Right ventricle myocardium inferior (tissue), 1 donor: ENCODE measurements at regions of chr15 and their contacts with region 1.

Region 1: DNA sequence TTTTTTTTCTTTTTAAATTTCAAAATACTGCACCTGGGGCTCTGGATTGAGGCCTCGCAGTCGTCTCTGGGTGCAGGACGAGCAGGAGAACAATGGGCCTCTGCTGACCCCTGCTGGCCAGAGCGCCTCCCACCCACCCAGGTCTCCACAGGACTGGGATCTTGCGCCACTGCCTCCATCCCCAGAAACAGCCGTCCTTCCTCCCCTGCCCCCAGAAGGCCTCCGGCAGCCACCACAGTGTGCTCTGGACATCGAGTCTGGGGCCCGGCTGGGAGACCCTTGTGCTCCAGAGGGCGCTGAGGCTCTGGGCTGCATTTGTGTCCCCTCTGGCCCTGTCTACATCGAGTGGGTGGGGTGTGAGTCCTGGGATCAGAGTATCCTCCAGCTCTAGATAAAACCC is 6.6 kb upstream of the ACSBG1 start:
- DNase-seq: peak; percentile 88
- ATAC-seq: peak; percentile 92

Region 2: DNA sequence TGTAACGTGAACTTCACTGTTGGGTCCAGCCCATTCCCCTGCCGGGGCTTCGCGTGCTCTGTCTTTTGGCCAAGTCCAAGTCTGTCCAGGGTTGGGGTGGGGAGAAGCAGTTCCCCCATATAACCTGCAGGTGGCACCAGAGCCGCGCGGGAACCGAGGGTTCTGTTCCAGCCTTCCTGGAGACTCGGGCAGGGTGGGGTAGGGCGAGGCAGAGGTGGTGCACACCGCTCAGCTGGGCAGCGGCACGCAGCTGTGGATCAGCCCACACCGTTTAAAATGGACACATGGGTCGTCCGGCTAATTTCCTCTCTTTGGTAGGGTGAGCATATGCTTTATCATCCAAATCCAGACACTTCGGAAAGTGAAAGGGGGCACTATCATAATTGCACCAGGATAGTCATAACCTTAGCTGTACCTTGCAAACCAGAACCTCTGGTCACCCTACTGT is 281.6 kb before region 1 on chr15:
- intact Hi-C with region 1: loop called (anchors 5 kb)
- DNase-seq: peak; percentile 92
- ATAC-seq: peak; percentile 98

Region 3: DNA sequence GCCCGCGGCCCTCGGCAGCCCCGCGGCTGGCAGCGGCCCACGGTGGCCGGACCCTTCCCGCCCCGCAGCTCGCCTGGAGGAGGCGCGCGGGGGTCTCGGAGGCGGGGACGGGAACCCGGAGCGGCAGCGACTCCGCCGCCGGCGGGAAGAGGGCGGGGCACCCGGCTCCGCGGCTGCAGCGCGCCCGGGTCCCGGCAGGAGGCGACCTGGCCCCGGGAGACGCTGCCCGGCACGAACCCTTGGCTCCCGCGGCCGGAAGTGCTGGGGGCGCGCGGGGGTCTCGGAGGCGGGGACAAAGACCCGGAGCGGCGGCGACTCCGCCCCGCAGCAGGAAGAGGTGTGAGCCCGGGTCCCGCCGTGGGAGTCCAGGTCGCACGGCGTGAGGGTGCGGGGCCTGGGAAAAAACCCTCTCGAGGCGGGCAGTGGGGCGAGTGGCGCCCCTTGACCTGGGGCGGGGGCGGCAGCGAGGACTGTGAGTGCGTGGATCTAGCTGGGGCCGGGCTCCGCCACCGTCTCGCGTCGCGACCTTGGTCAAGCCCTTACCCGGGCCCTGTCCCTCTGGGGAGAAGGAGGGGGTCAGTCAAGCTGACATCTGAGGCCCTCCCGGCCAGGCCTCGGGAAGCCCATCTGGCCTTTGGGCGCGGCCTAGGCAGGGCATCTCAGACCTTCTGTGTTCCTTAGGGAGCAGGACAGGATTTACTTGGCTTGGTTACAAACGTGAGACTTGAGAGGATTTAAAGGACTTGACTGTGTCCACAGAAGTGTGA is 109.5 kb before region 1 on chr15 and contains the start of gene CIB2:
- intact Hi-C with region 1: loop called (anchors 5 kb)
- DNase-seq: peak; percentile 86
- ATAC-seq: peak; percentile 89
- total RNA-seq, gene CIB2: 21.2 TPM

Region 4: GRCh38 chr15:78177447-78177873 is 63.5 kb before region 1 on chr15:
- intact Hi-C with region 1: loop called (anchors 1 kb)
- DNase-seq: no peak
- ATAC-seq: peak; percentile 51

Region 5: DNA sequence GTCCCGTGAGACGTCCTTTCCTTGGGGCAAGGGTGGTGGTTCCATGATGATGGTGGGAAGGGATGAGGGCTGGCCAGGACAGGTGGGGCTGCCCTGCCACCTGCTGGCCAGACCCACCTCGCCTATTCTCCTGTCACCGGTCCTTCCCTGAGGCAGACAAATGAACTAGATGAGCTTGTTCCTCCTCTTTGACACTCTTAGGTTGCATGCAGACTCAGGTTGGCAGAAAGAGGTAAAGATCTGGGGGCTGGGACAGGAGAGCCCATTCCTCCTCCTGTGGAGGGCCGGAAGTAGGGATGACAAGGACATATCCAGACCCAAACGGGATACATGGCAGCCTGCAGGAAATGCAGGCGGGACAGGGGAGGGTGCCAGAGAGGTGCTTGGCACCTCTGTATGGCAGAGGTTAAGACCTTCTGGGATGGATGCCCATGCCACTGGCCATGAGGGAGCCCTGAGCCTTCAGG is 45.2 kb before region 1 on chr15:
- intact Hi-C with region 1: loop called (anchors 5 kb)
- DNase-seq: no peak
- ATAC-seq: peak; percentile 76